BJ (cell line): ENCODE measurements at regions of chr17 and their contacts with region 1.

Region 1: GRCh38 chr17:77429919-77430752 is 289.4 kb downstream of the SEC14L1 start:
- DNase-seq: peak; percentile 98
- H3K4me3 ChIP-seq: no peak overlapping the region
- H3K27me3 ChIP-seq: no peaks in the 10 kb centered on the region
- CTCF ChIP-seq: peak; percentile 91

Region 2: GRCh38 chr17:77227461-77228237 is 202.5 kb before region 1 on chr17:
- CTCF ChIA-PET with region 1: no interaction called
- POLR2A ChIA-PET with region 1: no interaction called
- DNase-seq: no peak
- H3K4me3 ChIP-seq: no peak overlapping the region
- H3K27me3 ChIP-seq: no peaks in the 10 kb centered on the region
- CTCF ChIP-seq: no peak

Region 3: GRCh38 chr17:77325577-77326075 is 104.5 kb before region 1 on chr17:
- CTCF ChIA-PET with region 1: interaction called, 40 read pairs
- POLR2A ChIA-PET with region 1: no interaction called
- DNase-seq: no peak
- H3K4me3 ChIP-seq: no peak overlapping the region
- H3K27me3 ChIP-seq: no peaks in the 10 kb centered on the region
- CTCF ChIP-seq: no peak

Region 4: GRCh38 chr17:77374170-77374936 is 55.8 kb before region 1 on chr17:
- CTCF ChIA-PET with region 1: interaction called, 12 read pairs
- POLR2A ChIA-PET with region 1: no interaction called
- DNase-seq: no peak
- H3K4me3 ChIP-seq: peak overlapping the region; percentile 78
- H3K27me3 ChIP-seq: no peaks in the 10 kb centered on the region
- CTCF ChIP-seq: peak; percentile 47

Region 5: DNA sequence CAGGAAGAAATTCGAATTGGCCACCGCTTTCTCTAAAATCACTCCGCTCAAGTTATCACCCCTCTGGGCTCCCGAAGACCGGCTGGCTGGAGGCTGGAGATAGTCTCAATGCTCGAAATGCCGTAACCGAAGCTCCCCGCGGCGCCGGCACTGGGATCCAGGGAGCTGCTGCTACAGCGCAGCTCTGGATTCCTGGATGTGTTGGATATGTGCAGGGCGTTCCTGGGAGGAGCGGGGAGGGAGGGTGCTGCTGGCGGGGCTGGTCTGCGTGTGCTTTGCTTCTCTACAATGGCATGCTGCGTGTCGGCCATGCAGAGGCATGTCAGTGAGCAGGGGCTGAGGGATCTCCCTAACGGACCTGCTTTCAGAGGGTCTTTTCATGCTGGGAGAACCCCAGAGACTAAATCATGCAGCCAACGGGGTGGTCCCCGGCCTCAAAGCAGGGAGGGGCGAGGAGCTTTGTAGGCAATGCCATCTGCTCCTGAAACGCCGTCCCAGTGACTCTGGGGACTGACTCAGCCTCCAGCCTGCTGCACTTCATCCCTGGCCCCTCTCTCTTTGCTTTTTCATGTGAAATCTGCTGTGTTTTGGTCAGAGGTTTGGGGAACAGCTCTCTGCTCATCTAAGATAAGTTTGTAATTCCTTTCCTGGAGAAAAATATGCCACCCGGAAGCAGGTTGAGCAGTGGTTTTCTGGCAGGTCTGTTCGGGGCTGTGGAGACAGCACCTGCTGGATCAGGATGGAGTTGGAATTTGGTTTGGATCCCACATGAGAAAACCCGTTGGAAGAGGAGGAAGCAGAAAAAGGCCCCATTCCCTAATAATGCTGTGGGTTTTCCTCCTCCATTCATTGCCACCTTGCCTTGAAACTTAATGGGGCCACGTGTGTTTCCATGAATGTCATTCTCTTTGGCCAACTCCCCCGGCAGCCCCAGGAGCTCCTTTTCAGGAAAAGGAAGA is 22.0 kb after region 1 on chr17:
- CTCF ChIA-PET with region 1: interaction called, 4 read pairs
- POLR2A ChIA-PET with region 1: interaction called, 13 read pairs
- DNase-seq: no peak
- H3K4me3 ChIP-seq: peak overlapping the region; percentile 40
- H3K27me3 ChIP-seq: no peaks in the 10 kb centered on the region
- CTCF ChIP-seq: no peak

Region 6: GRCh38 chr17:77476931-77477877 is 47.1 kb after region 1 on chr17:
- CTCF ChIA-PET with region 1: interaction called, 27 read pairs
- POLR2A ChIA-PET with region 1: interaction called, 4 read pairs
- DNase-seq: peak; percentile 97
- H3K4me3 ChIP-seq: no peak overlapping the region; the same call in 1 of the 2 replicates
- H3K27me3 ChIP-seq: no peaks in the 10 kb centered on the region
- CTCF ChIP-seq: peak; percentile 10; the same call in 1 of the 2 replicates